Activated naive CD4-positive, alpha-beta T cell treated with anti-CD3 and anti-CD28 coated beads for 36 hours (primary cell): ENCODE measurements at regions of chr17 and their contacts with region 1.

Region 1: GRCh38 chr17:56020369-56020768 is 132.9 kb upstream of the ANKFN1 start:
- DNase-seq: peak; percentile 37
- H3K4me3 Mint-ChIP-seq: no peak overlapping the region
- H3K27ac Mint-ChIP-seq: peak overlapping the region; percentile 51
- H3K4me1 Mint-ChIP-seq: peaks cover 52% of the 10 kb centered on the region
- H3K27me3 Mint-ChIP-seq: peaks cover 15% of the 10 kb centered on the region

Region 2: DNA sequence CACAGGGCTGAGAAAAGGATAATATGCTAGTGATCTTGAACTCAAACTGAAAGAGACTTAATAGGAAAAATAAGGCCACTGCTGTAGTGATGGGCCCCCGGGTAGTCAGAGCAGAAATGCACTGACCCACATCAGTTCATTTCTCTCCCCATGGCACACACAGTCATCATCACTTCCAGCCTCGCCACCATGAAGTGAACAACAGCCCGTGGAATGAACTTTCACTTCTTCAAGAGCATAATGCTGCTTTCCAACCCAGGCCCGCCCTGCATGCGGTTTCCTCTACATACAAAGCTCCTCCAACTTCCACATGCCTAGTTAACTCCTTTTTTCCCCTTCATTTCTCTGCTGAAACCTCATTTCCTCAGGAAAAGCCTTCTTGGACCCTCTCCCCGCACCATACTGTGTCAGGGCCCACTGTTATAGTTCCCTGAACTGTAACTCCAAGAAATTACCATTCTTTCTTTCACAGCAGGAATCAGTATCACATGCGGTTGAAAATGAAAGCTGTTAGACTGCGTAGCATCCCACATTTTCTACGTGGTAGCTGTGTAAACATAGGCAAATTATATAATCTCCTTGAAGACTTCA is 443.3 kb before region 1 on chr17:
- CTCF ChIA-PET with region 1: no interaction called
- intact Hi-C with region 1: loop called (anchors 1 kb)
- DNase-seq: peak; percentile 77
- H3K4me3 Mint-ChIP-seq: no peak overlapping the region
- H3K27ac Mint-ChIP-seq: no peak overlapping the region
- H3K4me1 Mint-ChIP-seq: peaks cover 29% of the 10 kb centered on the region
- H3K27me3 Mint-ChIP-seq: no peaks in the 10 kb centered on the region

Region 3: DNA sequence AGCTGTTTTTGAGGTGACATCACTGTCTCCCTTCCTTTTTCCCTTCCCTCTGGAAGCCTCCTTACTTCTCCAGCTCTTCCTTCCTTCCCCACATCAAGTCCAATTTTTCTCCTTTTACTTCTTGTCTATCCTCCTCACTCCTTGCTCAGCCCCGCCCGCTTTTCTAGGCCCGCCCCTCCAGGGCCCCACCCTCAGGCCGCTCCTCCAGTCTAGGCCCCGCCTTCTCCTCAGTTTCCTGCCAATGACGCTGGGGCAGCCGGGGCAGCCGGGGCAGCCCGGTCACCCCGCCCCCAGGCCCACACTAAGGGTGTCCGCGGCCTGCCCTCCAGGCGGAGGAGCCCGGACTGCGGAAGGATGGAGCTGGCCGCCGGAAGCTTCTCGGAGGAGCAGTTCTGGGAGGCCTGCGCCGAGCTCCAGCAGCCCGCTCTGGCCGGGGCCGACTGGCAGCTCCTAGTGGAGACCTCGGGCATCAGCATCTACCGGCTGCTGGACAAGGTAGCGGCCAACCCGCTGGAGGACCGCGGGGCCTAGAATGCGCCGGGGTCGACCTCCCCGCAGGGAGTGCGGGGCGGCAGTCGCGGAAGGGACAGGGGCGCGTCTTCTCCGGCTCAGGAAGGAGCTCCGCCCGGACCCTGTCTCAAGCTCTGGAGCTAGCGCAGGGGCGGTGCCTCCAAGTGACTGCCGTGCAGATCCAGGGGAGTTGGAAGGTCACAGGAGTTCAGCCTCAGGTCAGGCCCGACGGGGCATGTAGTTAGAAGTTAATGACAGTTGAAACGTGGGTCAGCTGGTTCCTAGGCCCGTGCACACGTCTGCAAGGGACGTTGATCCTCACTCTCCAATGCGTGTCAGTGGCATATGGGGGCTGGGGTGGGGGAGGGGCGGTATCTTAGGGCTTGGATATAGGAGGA is 269.4 kb before region 1 on chr17 and contains the start of gene PCTP:
- CTCF ChIA-PET with region 1: no interaction called
- intact Hi-C with region 1: loop called (anchors 5 kb)
- DNase-seq: peak; percentile 92
- H3K4me3 Mint-ChIP-seq: peak within 1 kb of the TSS; percentile 82
- H3K27ac Mint-ChIP-seq: no peak within 1 kb of the TSS
- H3K4me1 Mint-ChIP-seq: peaks cover 12% of the 10 kb centered on the region
- H3K27me3 Mint-ChIP-seq: peaks cover 18% of the 10 kb centered on the region
- total RNA-seq, gene PCTP: 8.8 to 10.3 TPM

Region 4: DNA sequence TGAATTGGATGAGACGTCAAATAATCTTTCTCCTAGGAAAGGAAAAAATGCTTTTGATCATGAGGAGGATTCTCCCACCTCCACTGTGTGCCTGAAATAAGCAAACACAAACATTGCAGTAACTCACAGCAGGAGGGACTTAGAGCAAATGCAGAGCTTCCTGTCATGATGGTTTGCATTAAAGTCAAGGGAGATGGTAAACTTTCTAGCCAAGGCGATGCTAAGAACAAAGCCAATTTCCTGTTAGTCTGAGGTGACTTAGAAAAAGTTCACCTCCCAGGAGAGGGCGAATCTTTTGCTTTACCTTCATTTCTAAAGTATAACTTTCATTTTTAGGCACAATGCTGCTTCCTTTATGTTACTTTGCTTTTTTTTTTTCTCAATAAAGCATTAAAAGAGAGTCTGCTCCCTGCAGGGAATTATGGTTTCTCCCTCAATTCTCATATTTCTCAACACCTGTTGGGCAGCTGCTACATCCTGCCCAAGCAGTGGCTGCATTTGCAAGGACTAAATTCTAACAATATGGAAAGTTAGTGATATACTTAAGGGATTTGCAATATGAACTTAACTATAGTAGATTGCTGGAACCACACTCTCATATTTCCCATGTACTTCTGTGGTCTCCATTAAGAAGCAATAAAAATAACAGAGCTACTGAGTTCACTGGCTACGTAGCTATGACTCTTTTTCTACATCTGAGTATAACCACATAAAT is 93.9 kb before region 1 on chr17:
- CTCF ChIA-PET with region 1: no interaction called
- intact Hi-C with region 1: loop called (anchors 1 kb)
- DNase-seq: no peak
- H3K4me3 Mint-ChIP-seq: no peak overlapping the region
- H3K27ac Mint-ChIP-seq: peak overlapping the region; percentile 38
- H3K4me1 Mint-ChIP-seq: peaks cover 7% of the 10 kb centered on the region
- H3K27me3 Mint-ChIP-seq: peaks cover 3% of the 10 kb centered on the region

Region 5: GRCh38 chr17:56292010-56292409 is 271.6 kb after region 1 on chr17:
- CTCF ChIA-PET with region 1: no interaction called
- intact Hi-C with region 1: loop called (anchors 5 kb)
- DNase-seq: no peak
- H3K4me3 Mint-ChIP-seq: no peak overlapping the region
- H3K27ac Mint-ChIP-seq: no peak overlapping the region
- H3K4me1 Mint-ChIP-seq: peaks cover 26% of the 10 kb centered on the region
- H3K27me3 Mint-ChIP-seq: no peaks in the 10 kb centered on the region

Region 6: GRCh38 chr17:56762988-56763387 is 742.6 kb after region 1 on chr17:
- CTCF ChIA-PET with region 1: no interaction called
- intact Hi-C with region 1: loop called (anchors 2 kb)
- DNase-seq: peak; percentile 37
- H3K4me3 Mint-ChIP-seq: peak overlapping the region; percentile 26
- H3K27ac Mint-ChIP-seq: peak overlapping the region; percentile 75
- H3K4me1 Mint-ChIP-seq: peaks cover 25% of the 10 kb centered on the region
- H3K27me3 Mint-ChIP-seq: no peaks in the 10 kb centered on the region